Left lung (tissue), 14 donors: ENCODE measurements at regions of chr4 and their contacts with region 1.

Region 1: GRCh38 chr4:54217642-54218495 is 11.2 kb upstream of the PDGFRA start:
- DNase-seq: peak in 3 of 4 donors; percentile 56 to 93 (median 90)
- ATAC-seq: peak; percentile 97
- H3K4me3 ChIP-seq: no peak overlapping the region
- H3K27ac ChIP-seq: no peak overlapping the region
- H3K4me1 ChIP-seq: peaks cover 5 to 8% of the 10 kb centered on the region in 2 donors
- H3K27me3 ChIP-seq: peaks cover 6 to 47% of the 10 kb centered on the region in 2 donors
- CTCF ChIP-seq: peak; percentile 79 to 81

Region 2: DNA sequence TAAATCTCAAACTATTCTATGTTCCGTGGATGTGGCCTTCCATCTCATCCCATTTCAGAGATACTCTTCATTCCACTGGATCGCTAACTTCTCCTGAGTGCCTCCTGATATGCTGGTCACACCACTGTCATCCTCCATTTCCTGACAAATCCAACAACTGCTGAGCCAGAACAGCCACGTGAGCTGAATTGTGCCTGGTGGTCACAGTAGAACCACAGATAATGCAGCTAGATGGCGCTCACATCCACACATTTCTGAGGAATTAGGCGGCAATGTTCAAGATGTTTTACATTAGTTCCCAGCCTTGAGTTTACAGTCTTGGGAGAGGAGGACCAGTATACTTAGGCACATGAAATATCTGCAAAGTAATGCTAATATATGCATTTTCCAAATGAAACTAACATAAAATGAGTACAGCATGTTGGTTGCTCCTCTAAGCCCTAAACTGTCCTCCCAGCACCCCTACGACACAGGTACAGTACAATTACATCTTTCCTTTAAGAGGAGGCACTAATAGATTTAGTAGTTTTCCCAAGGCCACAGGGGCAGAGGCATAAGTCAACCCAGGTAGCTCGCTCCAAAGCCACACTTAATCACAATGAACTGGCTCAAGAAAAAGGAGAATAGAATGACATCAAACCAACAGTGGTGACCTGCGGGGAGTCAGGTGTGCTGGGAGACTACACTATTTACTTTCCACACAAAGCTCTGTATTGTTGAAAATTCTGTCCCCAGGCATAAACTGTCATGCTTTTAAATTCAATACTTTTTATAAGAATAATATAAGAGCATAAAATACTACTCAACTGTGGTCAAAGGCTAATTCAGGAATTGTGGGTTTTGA is 287.7 kb before region 1 on chr4:
- intact Hi-C with region 1: loop called in 1 of 2 experiments (anchors 5 kb)
- DNase-seq: peak in 3 of 4 donors; percentile 70 to 88 (median 76)
- ATAC-seq: peak; percentile 98
- H3K4me3 ChIP-seq: no peak overlapping the region
- H3K27ac ChIP-seq: no peak overlapping the region
- H3K4me1 ChIP-seq: peaks cover 0 to 17% of the 10 kb centered on the region in 2 donors
- H3K27me3 ChIP-seq: peaks cover 0 to 20% of the 10 kb centered on the region in 2 donors
- CTCF ChIP-seq: peak; percentile 51 to 74

Region 3: GRCh38 chr4:54107951-54108873 is 109.7 kb before region 1 on chr4:
- intact Hi-C with region 1: no loop called
- DNase-seq: no peak
- ATAC-seq: no peak
- H3K4me3 ChIP-seq: no peak overlapping the region
- H3K27ac ChIP-seq: no peak overlapping the region
- H3K4me1 ChIP-seq: peaks cover 0 to 8% of the 10 kb centered on the region in 2 donors
- H3K27me3 ChIP-seq: peaks cover 85 to 99% of the 10 kb centered on the region in 2 donors
- CTCF ChIP-seq: no peak